B cell (primary cell): ENCODE measurements at regions of chr16 and their contacts with region 1.

Region 1: GRCh38 chr16:29784901-29785500 is 5.5 kb upstream of the KIF22 start:
- DNase-seq: peak; percentile 78
- ATAC-seq: peak; percentile 95
- H3K4me3 ChIP-seq: peak overlapping the region in 4 of 5 experiments; percentile 4 to 49 (median 25)
- H3K4me3 Mint-ChIP-seq: peak overlapping the region; percentile 81
- H3K27ac ChIP-seq: no peak overlapping the region
- H3K27ac Mint-ChIP-seq: peak overlapping the region; percentile 50
- H3K4me1 ChIP-seq: peaks cover 13 to 23% of the 10 kb centered on the region in 2 donors
- H3K4me1 Mint-ChIP-seq: peaks cover 15% of the 10 kb centered on the region
- H3K27me3 ChIP-seq: no peaks in the 10 kb centered on the region
- H3K27me3 Mint-ChIP-seq: no peaks in the 10 kb centered on the region
- CTCF ChIP-seq: peak; percentile 81

Region 2: GRCh38 chr16:29729116-29729521 is 55.9 kb before region 1 on chr16:
- CTCF ChIA-PET with region 1: interaction called, 17 read pairs
- POLR2A ChIA-PET with region 1: no interaction called
- intact Hi-C with region 1: no loop called
- DNase-seq: peak; percentile 35
- ATAC-seq: peak; percentile 24
- H3K4me3 ChIP-seq: no peak overlapping the region
- H3K4me3 Mint-ChIP-seq: no peak overlapping the region
- H3K27ac ChIP-seq: no peak overlapping the region
- H3K27ac Mint-ChIP-seq: no peak overlapping the region
- H3K4me1 ChIP-seq: peaks cover 8 to 32% of the 10 kb centered on the region in 2 donors
- H3K4me1 Mint-ChIP-seq: peaks cover 24% of the 10 kb centered on the region
- H3K27me3 ChIP-seq: no peaks in the 10 kb centered on the region
- H3K27me3 Mint-ChIP-seq: no peaks in the 10 kb centered on the region
- CTCF ChIP-seq: no peak

Region 3: DNA sequence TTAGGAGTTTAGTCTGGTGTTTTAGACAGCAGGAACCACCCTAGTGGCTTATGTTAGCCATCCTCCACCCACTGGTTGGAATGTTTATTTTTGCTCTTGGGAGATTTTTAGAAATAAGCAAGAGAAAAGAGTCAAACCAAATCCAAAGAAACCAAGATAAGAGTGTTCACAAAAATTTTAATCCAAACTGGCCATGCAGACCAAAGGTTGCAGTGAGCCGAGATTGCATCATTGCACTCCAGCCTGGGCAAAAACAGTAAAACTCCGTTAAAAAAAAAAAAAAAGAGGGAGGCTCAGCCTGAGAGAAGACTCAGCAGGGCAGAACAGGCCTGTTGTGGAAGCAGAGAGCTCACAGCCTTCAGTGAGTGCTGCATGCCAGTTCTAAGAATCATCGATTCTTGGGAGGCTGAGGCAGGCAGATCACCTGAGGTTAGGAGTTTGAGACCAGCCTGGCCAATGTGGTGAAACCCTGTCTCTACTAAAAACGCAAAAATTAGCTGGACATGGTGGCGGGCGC is 27.0 kb before region 1 on chr16:
- CTCF ChIA-PET with region 1: interaction called, 20 read pairs
- POLR2A ChIA-PET with region 1: interaction called, 10 read pairs
- intact Hi-C with region 1: no loop called
- DNase-seq: no peak
- ATAC-seq: no peak
- H3K4me3 ChIP-seq: no peak overlapping the region
- H3K4me3 Mint-ChIP-seq: no peak overlapping the region
- H3K27ac ChIP-seq: no peak overlapping the region
- H3K27ac Mint-ChIP-seq: peak overlapping the region; percentile 41
- H3K4me1 ChIP-seq: peaks cover 10 to 30% of the 10 kb centered on the region in 2 donors
- H3K4me1 Mint-ChIP-seq: peaks cover 15% of the 10 kb centered on the region
- H3K27me3 ChIP-seq: no peaks in the 10 kb centered on the region
- H3K27me3 Mint-ChIP-seq: no peaks in the 10 kb centered on the region
- CTCF ChIP-seq: no peak